Esophagus muscularis mucosa (tissue), 4 donors: ENCODE measurements at regions of chr19 and their contacts with region 1.

Region 1: DNA sequence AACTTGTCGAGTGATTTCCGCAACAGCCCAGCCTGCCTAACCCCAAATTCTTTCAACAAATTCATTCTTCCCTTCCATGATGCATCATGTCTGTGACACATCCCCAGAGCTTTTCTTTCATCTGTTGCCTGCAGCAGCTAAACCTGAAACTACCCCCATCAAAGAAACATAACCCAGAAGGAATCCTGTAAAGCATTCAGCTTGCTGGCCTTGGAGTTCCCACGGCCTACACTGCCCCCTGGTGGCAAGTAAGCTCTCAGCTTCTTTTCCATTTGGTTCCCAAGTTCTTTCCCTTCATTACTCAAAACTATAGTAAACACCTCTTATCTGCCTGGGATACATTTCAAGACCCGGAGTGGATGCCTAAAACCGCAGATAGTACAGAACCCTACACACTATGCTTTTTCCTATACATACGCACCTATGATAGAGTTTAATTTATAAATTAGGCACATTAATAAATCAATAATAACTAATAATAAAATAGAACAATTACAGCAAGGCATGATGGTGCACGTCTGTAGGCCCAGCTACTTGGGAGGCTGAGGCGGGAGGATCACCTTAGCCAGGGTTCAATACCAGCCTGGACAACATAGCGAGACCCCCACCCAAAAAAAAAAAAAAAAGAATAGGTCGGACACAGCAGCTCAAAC is 7.4 kb downstream of the ETHE1 start:
- DNase-seq: no peak
- H3K4me3 ChIP-seq: no peak overlapping the region
- H3K27ac ChIP-seq: no peak overlapping the region
- H3K4me1 ChIP-seq: peaks cover 4 to 24% (median 12%) of the 10 kb centered on the region in 4 donors
- H3K27me3 ChIP-seq: no peaks in the 10 kb centered on the region
- CTCF ChIP-seq: peak; percentile 86 to 88 (median 87)
- EP300 ChIP-seq: no peak
- POLR2A ChIP-seq: no peak

Region 2: GRCh38 chr19:43446746-43447489 is 72.6 kb before region 1 on chr19:
- intact Hi-C with region 1: loop called (anchors 1 kb)
- DNase-seq: no peak
- H3K4me3 ChIP-seq: no peak overlapping the region
- H3K27ac ChIP-seq: no peak overlapping the region
- H3K4me1 ChIP-seq: peaks cover 0 to 7% (median 3%) of the 10 kb centered on the region in 4 donors
- H3K27me3 ChIP-seq: no peaks in the 10 kb centered on the region
- CTCF ChIP-seq: peak; percentile 93 to 98 (median 96)
- EP300 ChIP-seq: no peak
- POLR2A ChIP-seq: no peak

Region 3: DNA sequence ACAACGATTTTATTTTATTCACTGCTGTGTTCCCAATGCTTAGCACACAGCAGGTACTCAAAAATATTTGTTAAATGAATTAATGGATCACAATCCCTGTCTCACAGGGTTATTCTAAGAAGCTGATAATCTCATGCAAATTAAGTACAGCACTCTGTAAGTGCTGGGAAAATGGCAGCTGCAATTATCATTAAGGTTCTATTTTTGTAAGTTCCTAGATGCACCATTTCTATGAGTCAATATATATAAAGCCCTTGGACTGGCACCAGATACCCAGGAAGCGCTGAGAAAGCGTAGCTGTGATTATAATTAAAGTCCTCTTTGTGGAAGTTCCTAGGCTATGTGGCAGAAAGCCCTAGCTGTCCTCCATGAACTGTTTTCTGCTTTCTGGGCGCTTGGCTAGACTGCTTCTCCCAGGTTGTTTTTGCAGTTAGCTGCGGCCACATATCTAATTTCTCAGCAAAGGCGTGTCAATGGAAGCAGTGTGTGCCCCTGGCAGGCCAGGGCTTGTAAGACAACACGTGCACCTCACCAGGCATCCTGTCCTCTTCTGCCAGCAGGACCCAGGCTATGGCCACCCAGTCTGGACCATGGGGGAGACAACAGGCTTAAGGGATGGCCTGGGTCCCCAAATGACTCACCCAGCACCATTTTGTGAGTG is 87.1 kb after region 1 on chr19:
- intact Hi-C with region 1: no loop called
- DNase-seq: no peak
- H3K4me3 ChIP-seq: no peak overlapping the region
- H3K27ac ChIP-seq: no peak overlapping the region
- H3K4me1 ChIP-seq: no peaks in the 10 kb centered on the region
- H3K27me3 ChIP-seq: no peaks in the 10 kb centered on the region
- CTCF ChIP-seq: no peak
- EP300 ChIP-seq: no peak
- POLR2A ChIP-seq: no peak